CD8-positive, alpha-beta T cell (primary cell): ENCODE measurements at regions of chr19 and their contacts with region 1.

Region 1: DNA sequence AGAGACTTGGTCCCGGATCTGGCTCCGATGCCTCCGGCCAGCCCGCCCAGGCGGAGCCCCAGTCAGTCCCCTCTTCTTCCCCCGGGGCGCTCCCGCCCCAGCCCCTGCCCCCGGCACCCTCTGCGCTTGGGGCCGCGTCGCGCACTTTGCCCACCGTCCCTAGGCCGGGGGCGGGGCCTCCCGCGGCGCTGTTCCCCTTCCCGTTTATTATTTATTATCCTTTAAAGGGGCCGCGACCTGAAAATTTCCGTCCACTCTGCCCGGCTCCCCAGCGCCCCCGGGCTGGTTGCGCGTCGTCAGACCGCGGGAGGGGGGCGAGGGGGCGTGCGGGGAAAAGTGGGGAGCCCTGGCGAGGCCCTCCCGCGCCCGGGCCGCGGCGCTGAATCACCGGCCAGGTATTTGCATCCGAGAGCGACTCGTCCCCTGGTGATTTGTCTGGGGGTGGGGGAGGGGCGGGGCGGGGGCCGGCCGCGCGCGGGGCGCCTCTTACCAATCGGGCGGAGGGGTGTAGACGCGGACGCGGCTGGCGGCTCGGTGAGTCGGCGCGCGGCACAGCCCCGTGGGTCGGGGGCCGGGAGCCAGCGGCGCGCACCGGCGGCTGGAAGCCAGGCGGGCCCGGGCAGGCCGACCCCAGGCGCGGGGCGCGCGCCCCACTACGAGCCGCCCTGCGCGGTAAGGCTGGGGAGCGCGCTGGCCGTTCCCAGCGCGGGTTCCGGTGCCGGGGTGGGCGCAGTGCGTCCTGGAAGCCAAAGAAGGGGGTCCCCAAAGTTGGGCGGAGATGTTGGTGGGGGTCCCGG is at the start of gene ARID3A:
- DNase-seq: peak in 8 of 9 experiments; percentile 62 to 88 (median 76)
- ATAC-seq: peak; percentile 67
- H3K4me3 ChIP-seq: peak within 1 kb of the TSS; percentile 73 to 78
- H3K4me3 Mint-ChIP-seq: peak within 1 kb of the TSS; percentile 80
- H3K27ac ChIP-seq: peak within 1 kb of the TSS; percentile 42 to 74
- H3K27ac Mint-ChIP-seq: no peak within 1 kb of the TSS
- H3K4me1 ChIP-seq: peaks cover 20% of the 10 kb centered on the region
- H3K4me1 Mint-ChIP-seq: peaks cover 17% of the 10 kb centered on the region
- H3K27me3 ChIP-seq: no peaks in the 10 kb centered on the region
- H3K27me3 Mint-ChIP-seq: no peaks in the 10 kb centered on the region
- CTCF ChIP-seq: no peak
- total RNA-seq, gene ARID3A: 2.0 to 2.7 TPM

Region 2: DNA sequence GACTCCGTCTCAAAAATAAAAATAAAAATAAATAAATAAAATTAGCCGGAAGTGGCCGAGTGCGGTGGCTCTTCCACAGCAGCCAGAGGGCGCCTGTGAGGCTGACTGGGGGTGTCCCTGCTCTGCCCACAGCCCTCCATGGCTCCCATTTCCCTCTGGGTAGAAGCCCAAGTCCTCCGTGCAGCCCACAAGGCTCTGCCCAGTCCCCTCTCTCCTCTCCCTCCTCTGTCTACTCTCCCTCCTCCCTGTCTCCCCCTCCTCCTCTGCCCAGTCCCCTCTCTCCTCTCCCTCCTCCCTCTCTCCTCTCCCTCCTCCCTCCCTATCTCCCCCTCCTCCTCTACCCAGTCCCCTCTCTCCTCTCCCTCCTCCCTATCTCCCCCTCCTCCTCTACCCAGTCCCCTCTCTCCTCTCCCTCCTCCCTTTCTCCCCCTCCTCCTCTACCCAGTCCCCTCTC is 154.4 kb before region 1 on chr19:
- CTCF ChIA-PET with region 1: interaction called, 12 read pairs
- POLR2A ChIA-PET with region 1: interaction called, 3 read pairs
- intact Hi-C with region 1: loop called in 1 of 2 experiments (anchors 1 kb)
- DNase-seq: peak in 2 of 9 experiments; percentile 47 to 56
- ATAC-seq: no peak
- H3K4me3 ChIP-seq: no peak overlapping the region
- H3K4me3 Mint-ChIP-seq: no peak overlapping the region
- H3K27ac ChIP-seq: no peak overlapping the region
- H3K27ac Mint-ChIP-seq: no peak overlapping the region
- H3K4me1 ChIP-seq: no peaks in the 10 kb centered on the region
- H3K4me1 Mint-ChIP-seq: peaks cover 2% of the 10 kb centered on the region
- H3K27me3 ChIP-seq: peaks cover 0 to 4% of the 10 kb centered on the region in 2 experiments
- H3K27me3 Mint-ChIP-seq: peaks cover 6% of the 10 kb centered on the region
- CTCF ChIP-seq: no peak

Region 3: DNA sequence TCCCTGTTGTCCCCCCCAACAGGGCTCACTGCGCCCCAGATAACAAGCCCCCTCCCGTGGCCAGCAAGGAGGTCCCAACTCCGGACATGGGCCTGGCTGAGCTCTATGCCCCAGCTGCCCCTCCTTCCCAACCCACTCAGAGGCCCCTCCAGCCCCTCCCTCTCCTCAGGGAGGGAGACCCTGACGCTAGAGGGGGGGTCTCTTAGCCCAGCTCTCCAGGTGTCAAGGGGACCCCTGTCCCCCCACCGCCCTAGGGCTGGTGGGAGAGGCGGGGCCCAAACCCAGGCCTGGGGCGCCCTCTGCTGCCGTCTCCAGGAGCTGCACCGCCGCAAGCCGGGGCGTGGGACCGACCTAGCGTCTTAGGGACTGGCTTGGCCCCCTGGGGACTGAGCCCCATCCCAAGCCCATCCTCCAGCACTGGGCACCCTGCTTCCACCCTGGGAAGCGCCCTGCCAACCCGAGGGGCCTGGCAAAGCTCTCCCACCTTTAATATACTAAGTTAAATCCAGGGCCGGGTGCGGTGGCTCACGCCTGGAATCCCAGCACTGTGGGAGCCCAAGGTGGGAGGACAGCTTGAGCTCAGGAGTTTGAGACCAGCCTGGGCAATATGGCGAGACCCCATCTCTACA is 75.9 kb after region 1 on chr19:
- CTCF ChIA-PET with region 1: interaction called, 5 read pairs
- POLR2A ChIA-PET with region 1: no interaction called
- intact Hi-C with region 1: loop called (anchors 1 kb)
- DNase-seq: peak; percentile 57 to 84 (median 75)
- ATAC-seq: peak; percentile 78
- H3K4me3 ChIP-seq: no peak overlapping the region
- H3K4me3 Mint-ChIP-seq: no peak overlapping the region
- H3K27ac ChIP-seq: no peak overlapping the region
- H3K27ac Mint-ChIP-seq: no peak overlapping the region
- H3K4me1 ChIP-seq: peaks cover 24% of the 10 kb centered on the region
- H3K4me1 Mint-ChIP-seq: peaks cover 12% of the 10 kb centered on the region
- H3K27me3 ChIP-seq: peaks cover 18 to 32% of the 10 kb centered on the region in 2 experiments
- H3K27me3 Mint-ChIP-seq: peaks cover 15% of the 10 kb centered on the region
- CTCF ChIP-seq: peak; percentile 87

Region 4: GRCh38 chr19:1039646-1040475 is 114.1 kb after region 1 on chr19 and contains the start of gene ABCA7:
- CTCF ChIA-PET with region 1: no interaction called
- POLR2A ChIA-PET with region 1: no interaction called
- intact Hi-C with region 1: loop called in 1 of 2 experiments (anchors 1 kb)
- DNase-seq: peak; percentile 98 to 100 (median 99)
- ATAC-seq: peak; percentile 90
- H3K4me3 ChIP-seq: peak within 1 kb of the TSS; percentile 71 to 96
- H3K4me3 Mint-ChIP-seq: peak within 1 kb of the TSS; percentile 99
- H3K27ac ChIP-seq: peak within 1 kb of the TSS; percentile 65 to 71
- H3K27ac Mint-ChIP-seq: peak within 1 kb of the TSS; percentile 96
- H3K4me1 ChIP-seq: peaks cover 43% of the 10 kb centered on the region
- H3K4me1 Mint-ChIP-seq: peaks cover 50% of the 10 kb centered on the region
- H3K27me3 ChIP-seq: no peaks in the 10 kb centered on the region
- H3K27me3 Mint-ChIP-seq: no peaks in the 10 kb centered on the region
- CTCF ChIP-seq: no peak
- total RNA-seq, gene ABCA7: 93.3 to 98.0 TPM

Region 5: GRCh38 chr19:1189419-1189818 is 263.7 kb after region 1 on chr19:
- CTCF ChIA-PET with region 1: interaction called, 3 read pairs
- POLR2A ChIA-PET with region 1: interaction called, 3 read pairs
- intact Hi-C with region 1: loop called in 1 of 2 experiments (anchors 5 kb)
- DNase-seq: peak in 8 of 9 experiments; percentile 31 to 75 (median 59)
- ATAC-seq: peak; percentile 65
- H3K4me3 ChIP-seq: no peak overlapping the region
- H3K4me3 Mint-ChIP-seq: no peak overlapping the region
- H3K27ac ChIP-seq: peak overlapping the region in 1 of 2 experiments; percentile 28
- H3K27ac Mint-ChIP-seq: peak overlapping the region; percentile 32
- H3K4me1 ChIP-seq: peaks cover 22% of the 10 kb centered on the region
- H3K4me1 Mint-ChIP-seq: peaks cover 20% of the 10 kb centered on the region
- H3K27me3 ChIP-seq: no peaks in the 10 kb centered on the region
- H3K27me3 Mint-ChIP-seq: no peaks in the 10 kb centered on the region
- CTCF ChIP-seq: no peak

Region 6: DNA sequence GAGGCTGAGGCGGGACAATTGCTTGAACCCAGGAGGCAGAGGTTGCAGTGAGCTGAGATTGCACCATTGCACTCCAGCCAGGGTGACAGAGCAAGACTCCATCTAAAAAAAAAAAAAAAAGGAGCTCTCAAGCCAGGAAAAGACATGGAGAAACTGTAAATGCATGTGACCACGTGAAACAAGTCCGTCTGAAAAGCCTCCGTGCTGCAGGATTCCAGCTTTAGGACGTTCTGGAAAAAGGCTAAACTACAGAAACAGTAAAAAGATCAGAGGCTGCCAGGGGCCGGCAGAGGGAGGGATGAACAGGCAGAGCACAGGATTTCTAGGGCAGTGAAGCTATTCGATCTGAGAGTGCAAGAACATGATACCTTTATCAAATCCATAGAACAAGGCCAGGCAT is 417.3 kb after region 1 on chr19:
- CTCF ChIA-PET with region 1: no interaction called
- POLR2A ChIA-PET with region 1: no interaction called
- intact Hi-C with region 1: no loop called
- DNase-seq: no peak
- ATAC-seq: no peak
- H3K4me3 ChIP-seq: no peak overlapping the region
- H3K4me3 Mint-ChIP-seq: no peak overlapping the region
- H3K27ac ChIP-seq: no peak overlapping the region
- H3K27ac Mint-ChIP-seq: no peak overlapping the region
- H3K4me1 ChIP-seq: no peaks in the 10 kb centered on the region
- H3K4me1 Mint-ChIP-seq: peaks cover 4% of the 10 kb centered on the region
- H3K27me3 ChIP-seq: no peaks in the 10 kb centered on the region
- H3K27me3 Mint-ChIP-seq: peaks cover 4% of the 10 kb centered on the region
- CTCF ChIP-seq: no peak